ENCODE measurements at regions of chr5 and their contacts with region 1.

Region 1: GRCh38 chr5:138372225-138372624 is 19.7 kb downstream of the KDM3B start:
- DNase-seq: no peak
- ATAC-seq: no peak
- H3K4me3 ChIP-seq: no peak overlapping the region
- H3K4me1 ChIP-seq: peaks cover 2% of the 10 kb centered on the region
- CTCF ChIP-seq: no peak

Region 2: DNA sequence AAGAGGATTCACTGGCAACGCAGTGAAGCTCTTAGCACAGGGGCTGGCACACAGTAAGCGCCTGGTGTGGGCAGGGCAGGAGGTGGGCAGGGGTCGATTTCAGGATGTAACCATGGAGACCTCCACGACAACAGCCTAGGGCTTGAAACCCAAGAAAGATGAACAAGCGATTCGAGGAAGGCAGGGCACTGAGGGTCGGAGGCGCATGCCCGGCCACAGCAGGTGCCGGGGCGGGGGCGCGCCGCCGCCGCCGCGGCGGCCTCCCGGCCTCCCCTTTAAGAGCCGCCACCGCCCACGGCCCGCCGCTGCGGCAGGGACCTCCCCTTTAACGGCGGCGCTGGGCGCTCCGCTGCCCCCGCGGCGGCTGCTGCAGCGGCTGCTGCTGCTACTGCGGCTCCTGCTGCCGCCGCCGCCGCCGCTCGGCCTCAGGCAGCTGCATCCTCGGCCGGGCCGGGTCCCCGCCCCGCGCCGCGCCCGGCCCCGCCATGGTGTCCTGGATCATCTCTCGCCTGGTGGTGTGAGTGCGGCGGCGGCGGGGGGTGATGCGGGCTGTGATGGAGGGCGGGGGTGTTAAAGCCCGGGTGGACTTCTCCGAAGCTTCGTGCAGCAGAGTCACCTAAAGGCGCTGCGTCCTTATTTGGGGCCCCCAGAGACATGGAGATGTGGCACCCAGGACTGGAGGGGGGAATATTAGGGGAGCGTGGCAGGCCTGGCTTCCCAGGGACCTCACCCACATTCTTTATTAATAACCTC is 66.7 kb after region 1 on chr5 and contains the start of gene REEP2:
- intact Hi-C with region 1: loop called in 1 of 2 experiments (anchors 5 kb)
- DNase-seq: peak in 1 of 3 donors; percentile 57
- ATAC-seq: peak; percentile 81
- H3K4me3 ChIP-seq: no peak within 1 kb of the TSS
- H3K4me1 ChIP-seq: peaks cover 5% of the 10 kb centered on the region
- CTCF ChIP-seq: no peak
- total RNA-seq, gene REEP2: 1.0 to 16.3 (median 2.7) TPM

Region 3: DNA sequence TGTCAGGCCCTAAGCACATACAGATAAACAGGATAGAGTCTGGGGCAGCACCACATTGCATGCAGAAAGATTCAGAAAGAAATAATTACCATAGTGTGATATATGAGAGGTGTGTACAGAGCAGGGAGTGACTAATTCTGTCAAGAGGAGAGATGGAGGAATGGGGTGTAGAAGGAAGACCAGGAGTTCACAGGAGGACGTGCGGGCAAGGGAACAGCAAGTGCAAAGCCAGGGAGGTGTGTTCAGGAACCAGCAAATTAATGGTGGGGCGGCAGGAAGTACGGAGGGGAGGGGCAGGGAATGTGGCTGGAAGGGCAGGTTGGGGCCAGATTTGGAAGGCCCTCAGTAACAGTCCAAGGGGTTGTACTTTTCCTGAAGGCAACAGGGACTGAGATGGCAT is 110.4 kb after region 1 on chr5:
- intact Hi-C with region 1: no loop called
- DNase-seq: no peak
- ATAC-seq: peak; percentile 32
- H3K4me3 ChIP-seq: no peak overlapping the region
- H3K4me1 ChIP-seq: no peaks in the 10 kb centered on the region
- CTCF ChIP-seq: no peak